ENCODE measurements at regions of chr16 and their contacts with region 1.

Region 1: DNA sequence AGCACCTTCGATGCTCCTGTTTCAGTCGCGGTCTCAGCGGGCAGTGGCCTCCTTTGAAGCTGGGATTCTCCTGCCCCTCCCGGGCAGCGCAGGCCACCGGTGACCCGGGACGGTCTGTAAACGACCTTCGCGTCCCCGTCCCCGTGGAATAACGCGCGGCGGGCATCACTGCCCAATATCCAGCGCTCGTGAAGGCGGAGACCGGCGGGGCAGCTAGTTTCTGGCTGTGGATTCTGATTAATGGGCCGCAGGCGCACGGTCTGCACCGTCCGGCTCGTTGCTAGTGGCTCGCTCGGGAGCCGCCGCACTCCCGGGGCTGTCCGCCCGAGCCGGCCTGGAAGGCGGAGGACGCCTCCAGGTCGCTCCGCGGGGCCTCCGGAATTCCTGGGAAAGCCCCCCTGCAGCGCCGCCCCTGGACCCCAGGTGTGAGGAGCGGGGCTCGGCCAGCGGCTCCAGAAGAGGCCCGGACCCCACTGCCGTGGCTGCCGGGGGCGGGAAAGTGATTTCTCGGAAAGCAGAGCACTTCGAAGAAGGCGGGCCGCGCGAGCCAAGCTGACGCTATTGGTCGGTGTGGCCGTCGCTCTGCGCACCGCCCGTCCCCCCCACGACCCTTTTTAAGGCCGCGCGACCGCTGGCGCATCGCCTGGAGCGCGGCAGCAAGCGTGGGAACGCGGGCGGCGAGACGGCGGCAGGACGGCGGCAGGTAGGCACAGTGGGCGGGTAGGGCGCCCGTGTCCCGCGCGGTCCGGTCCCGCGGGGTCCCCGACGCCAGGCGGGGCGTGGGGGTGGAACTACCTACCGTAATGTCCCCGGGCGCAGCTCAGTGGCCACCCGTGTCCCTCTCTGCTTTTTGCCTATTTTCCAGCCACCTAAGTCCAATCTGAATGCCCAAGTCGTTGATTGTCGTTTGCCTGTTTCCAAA is at the start of gene IRF8:
- DNase-seq: peak; percentile 89
- ATAC-seq: peak; percentile 64
- H3K4me3 Mint-ChIP-seq: peak within 1 kb of the TSS; percentile 84
- H3K27ac Mint-ChIP-seq: peak within 1 kb of the TSS; percentile 95
- H3K4me1 Mint-ChIP-seq: peaks cover 63% of the 10 kb centered on the region
- H3K27me3 Mint-ChIP-seq: no peaks in the 10 kb centered on the region
- CTCF ChIP-seq: no peak
- total RNA-seq, gene IRF8: 234 and 248 TPM in 2 replicates

Region 2: GRCh38 chr16:84315394-84315793 is 1583.4 kb before region 1 on chr16:
- CTCF ChIA-PET with region 1: no interaction called
- POLR2A ChIA-PET with region 1: no interaction called
- intact Hi-C with region 1: no loop called
- DNase-seq: no peak
- ATAC-seq: no peak
- H3K4me3 Mint-ChIP-seq: no peak overlapping the region
- H3K27ac Mint-ChIP-seq: no peak overlapping the region
- H3K4me1 Mint-ChIP-seq: no peaks in the 10 kb centered on the region
- H3K27me3 Mint-ChIP-seq: peaks cover 31% of the 10 kb centered on the region
- CTCF ChIP-seq: no peak

Region 3: DNA sequence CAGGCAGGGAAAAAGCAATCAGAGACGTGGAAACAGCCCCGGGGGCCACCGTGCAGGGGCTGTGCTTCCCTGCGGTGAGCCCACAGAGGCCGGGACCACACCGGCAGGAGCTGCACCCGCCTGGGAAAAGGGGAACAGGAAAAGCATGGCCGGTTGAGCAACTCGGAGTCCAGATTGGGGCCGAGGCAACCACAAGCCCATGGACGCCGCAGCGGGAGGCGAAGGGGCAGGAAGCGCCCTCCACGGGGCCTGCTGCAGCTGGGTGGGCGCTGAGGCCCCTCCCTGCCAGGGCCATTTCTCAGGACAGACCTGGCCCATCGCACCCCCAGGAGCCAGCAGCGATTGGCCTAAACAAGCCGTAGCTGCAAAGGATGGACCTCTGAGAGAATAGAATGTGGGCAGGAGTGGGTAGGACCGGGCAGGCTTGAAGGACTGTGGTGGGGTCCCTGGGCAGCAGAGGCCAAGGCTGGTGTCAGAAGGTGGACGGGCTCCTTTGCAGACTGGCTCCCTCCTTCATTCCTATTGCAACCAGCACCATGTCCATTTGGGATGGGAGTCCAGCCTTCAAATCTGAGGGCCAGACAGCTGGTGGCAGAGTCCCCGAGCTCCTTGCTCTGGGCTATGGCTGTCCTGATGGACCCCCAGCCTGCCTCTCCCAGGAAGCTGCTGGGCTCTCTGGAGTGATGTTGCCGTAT is 68.9 kb before region 1 on chr16:
- CTCF ChIA-PET with region 1: interaction called, 4 read pairs
- POLR2A ChIA-PET with region 1: interaction called, 66 read pairs
- intact Hi-C with region 1: loop called (anchors 1 kb)
- DNase-seq: no peak
- ATAC-seq: no peak
- H3K4me3 Mint-ChIP-seq: peak overlapping the region; percentile 67
- H3K27ac Mint-ChIP-seq: peak overlapping the region; percentile 88
- H3K4me1 Mint-ChIP-seq: peaks cover 57% of the 10 kb centered on the region
- H3K27me3 Mint-ChIP-seq: no peaks in the 10 kb centered on the region
- CTCF ChIP-seq: no peak

Region 4: GRCh38 chr16:85888405-85889331 is 10.1 kb before region 1 on chr16:
- CTCF ChIA-PET with region 1: interaction called, 3 read pairs
- POLR2A ChIA-PET with region 1: interaction called, 12 read pairs
- intact Hi-C with region 1: loop called (anchors 1 kb)
- DNase-seq: no peak
- ATAC-seq: peak; percentile 90
- H3K4me3 Mint-ChIP-seq: peak overlapping the region; percentile 44
- H3K27ac Mint-ChIP-seq: peak overlapping the region; percentile 90
- H3K4me1 Mint-ChIP-seq: peaks cover 46% of the 10 kb centered on the region
- H3K27me3 Mint-ChIP-seq: no peaks in the 10 kb centered on the region
- CTCF ChIP-seq: no peak

Region 5: DNA sequence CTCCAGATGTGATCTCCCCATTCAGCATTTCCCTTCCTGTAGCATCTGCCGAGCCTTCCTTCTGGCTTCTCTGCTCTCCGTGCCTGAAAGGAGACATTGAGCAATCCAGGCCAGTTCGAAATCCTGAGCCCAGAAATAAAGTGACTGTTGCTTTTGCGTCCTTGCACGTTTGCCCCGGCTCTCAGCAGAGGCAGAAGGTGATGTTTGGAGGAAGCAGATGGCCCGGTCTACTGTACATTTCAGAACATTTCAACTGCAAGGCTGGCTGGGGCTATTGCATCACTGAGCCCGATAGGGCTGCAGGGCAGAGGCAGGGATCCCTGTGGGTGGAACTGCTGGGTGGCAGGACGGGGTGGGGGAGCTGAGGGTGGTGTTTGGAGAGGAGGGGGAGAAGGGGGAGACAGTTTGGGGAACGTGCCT is 29.6 kb after region 1 on chr16:
- CTCF ChIA-PET with region 1: interaction called, 4 read pairs
- POLR2A ChIA-PET with region 1: interaction called, 41 read pairs
- intact Hi-C with region 1: no loop called
- DNase-seq: no peak
- ATAC-seq: peak; percentile 29
- H3K4me3 Mint-ChIP-seq: peak overlapping the region; percentile 68
- H3K27ac Mint-ChIP-seq: peak overlapping the region; percentile 80
- H3K4me1 Mint-ChIP-seq: peaks cover 86% of the 10 kb centered on the region
- H3K27me3 Mint-ChIP-seq: no peaks in the 10 kb centered on the region
- CTCF ChIP-seq: no peak

Region 6: DNA sequence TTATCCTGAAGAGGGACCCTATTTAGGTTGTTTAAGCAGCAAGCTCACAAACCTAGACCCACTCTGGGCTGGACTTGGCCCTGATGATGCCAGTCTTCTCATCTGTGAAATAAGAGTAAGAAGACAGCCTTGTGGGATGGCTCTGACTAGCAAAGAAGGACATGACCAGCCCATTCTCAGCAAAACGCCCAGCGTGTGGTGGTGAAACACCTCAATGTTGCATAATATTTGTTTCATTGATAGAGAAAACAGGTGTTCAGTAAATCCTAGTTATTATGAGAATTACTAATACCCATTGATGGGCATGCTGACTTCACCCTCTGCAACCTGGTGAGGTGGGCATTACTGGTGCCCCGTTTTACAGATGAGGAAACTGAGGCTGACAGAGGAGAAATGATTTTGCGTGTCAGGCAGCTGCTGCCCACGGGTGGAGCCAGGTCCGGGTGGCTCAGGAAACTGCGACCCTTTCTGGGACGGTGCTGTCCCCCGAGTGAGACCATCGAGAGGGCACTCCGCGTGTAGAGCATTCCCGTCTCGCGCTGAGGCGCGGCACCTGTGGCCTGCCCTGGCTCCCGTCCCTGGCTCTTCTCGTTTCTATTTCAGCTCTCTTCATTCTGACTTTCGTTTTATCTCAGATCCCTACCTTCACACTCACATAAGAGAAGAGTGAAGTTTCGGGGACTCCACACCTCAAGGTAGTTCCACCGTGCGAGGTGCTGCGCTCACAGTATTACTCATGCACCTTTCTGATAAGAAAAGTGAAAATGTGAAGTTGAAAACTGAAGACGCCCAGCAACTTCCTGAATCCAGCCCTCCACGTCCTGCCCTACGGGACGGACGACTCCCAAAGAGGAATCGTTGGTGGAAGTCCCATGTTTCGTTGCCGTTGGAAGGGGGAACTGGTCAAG is 48.7 kb after region 1 on chr16:
- CTCF ChIA-PET with region 1: interaction called, 4 read pairs
- POLR2A ChIA-PET with region 1: interaction called, 120 read pairs
- intact Hi-C with region 1: loop called (anchors 1 kb)
- DNase-seq: peak; percentile 51
- ATAC-seq: peak; percentile 79
- H3K4me3 Mint-ChIP-seq: peak overlapping the region; percentile 84
- H3K27ac Mint-ChIP-seq: peak overlapping the region; percentile 93
- H3K4me1 Mint-ChIP-seq: peaks cover 91% of the 10 kb centered on the region
- H3K27me3 Mint-ChIP-seq: no peaks in the 10 kb centered on the region
- CTCF ChIP-seq: no peak

Region 7: DNA sequence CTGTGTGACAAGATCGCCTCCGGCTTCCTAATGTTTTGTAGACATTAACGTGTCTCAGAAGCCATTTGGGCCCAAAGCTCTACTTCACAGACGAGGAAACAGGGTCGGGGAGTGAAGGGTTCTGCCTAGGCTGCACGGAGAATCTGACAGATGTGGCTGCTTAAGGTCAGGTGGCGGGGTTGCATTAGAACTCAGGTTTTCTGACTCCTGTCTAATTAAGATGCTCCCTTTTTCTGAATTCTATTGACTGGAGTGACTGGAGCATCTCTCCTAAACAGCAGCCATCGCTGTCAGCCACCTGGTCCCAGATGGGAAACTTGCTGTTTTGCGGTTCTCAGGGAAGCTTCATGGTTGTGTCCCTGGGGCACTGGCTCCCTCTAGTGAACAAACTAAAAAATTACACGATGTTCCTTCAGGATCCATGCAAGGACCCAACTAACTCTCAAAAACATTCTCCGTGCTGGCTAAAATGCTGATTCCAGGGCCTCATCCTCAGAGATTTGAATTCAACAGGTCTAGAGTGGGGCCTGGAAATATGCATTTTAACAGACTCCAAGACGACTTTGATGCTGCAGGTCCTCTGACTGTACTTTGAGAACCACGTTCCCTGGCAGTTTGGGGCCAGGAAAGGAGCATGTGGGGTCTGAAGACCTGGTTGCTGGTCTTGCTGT is 117.6 kb after region 1 on chr16:
- CTCF ChIA-PET with region 1: interaction called, 11 read pairs
- POLR2A ChIA-PET with region 1: interaction called, 4 read pairs
- intact Hi-C with region 1: loop called (anchors 2 kb)
- DNase-seq: peak; percentile 32
- ATAC-seq: peak; percentile 60
- H3K4me3 Mint-ChIP-seq: no peak overlapping the region
- H3K27ac Mint-ChIP-seq: no peak overlapping the region
- H3K4me1 Mint-ChIP-seq: peaks cover 36% of the 10 kb centered on the region
- H3K27me3 Mint-ChIP-seq: peaks cover 6% of the 10 kb centered on the region
- CTCF ChIP-seq: no peak

Measured in activated B cell treated with CpG ODN at 0.5 μM for 24 hours (primary cell).